ENCODE measurements at regions of chr18 and their contacts with region 1.

Region 1: GRCh38 chr18:63320046-63320689 is 599 bp upstream of the BCL2 start:
- DNase-seq: no peak
- ATAC-seq: peak; percentile 37
- H3K4me3 ChIP-seq: peak overlapping the region; percentile 54; the same call in 1 of the 2 replicates
- H3K27ac ChIP-seq: peak overlapping the region; percentile 90
- H3K4me1 ChIP-seq: peaks cover 20% of the 10 kb centered on the region
- H3K27me3 ChIP-seq: no peaks in the 10 kb centered on the region
- CTCF ChIP-seq: no peak; a peak in 1 of 6 replicates
- EP300 ChIP-seq: no peak
- POLR2A ChIP-seq: no peak; the same call in 1 of the 2 replicates
- RAD21 ChIP-seq: no peak

Region 2: GRCh38 chr18:63016270-63016669 is 303.9 kb before region 1 on chr18:
- CTCF ChIA-PET with region 1: interaction called, 123 read pairs
- POLR2A ChIA-PET with region 1: interaction called, 7 read pairs
- RAD21 ChIA-PET with region 1: interaction called, 58 read pairs
- SMC1A ChIA-PET with region 1: interaction called, 92 read pairs
- in situ Hi-C with region 1: loop called (anchors 5 kb)
- intact Hi-C with region 1: loop called (anchors 1 kb)
- DNase-seq: peak; percentile 21
- ATAC-seq: peak; percentile 92
- H3K4me3 ChIP-seq: no peak overlapping the region
- H3K27ac ChIP-seq: no peak overlapping the region
- H3K4me1 ChIP-seq: no peaks in the 10 kb centered on the region
- H3K27me3 ChIP-seq: no peaks in the 10 kb centered on the region
- CTCF ChIP-seq: peak; percentile 72 to 88 (median 72)
- EP300 ChIP-seq: no peak
- POLR2A ChIP-seq: no peak
- RAD21 ChIP-seq: peak; percentile 99

Region 3: DNA sequence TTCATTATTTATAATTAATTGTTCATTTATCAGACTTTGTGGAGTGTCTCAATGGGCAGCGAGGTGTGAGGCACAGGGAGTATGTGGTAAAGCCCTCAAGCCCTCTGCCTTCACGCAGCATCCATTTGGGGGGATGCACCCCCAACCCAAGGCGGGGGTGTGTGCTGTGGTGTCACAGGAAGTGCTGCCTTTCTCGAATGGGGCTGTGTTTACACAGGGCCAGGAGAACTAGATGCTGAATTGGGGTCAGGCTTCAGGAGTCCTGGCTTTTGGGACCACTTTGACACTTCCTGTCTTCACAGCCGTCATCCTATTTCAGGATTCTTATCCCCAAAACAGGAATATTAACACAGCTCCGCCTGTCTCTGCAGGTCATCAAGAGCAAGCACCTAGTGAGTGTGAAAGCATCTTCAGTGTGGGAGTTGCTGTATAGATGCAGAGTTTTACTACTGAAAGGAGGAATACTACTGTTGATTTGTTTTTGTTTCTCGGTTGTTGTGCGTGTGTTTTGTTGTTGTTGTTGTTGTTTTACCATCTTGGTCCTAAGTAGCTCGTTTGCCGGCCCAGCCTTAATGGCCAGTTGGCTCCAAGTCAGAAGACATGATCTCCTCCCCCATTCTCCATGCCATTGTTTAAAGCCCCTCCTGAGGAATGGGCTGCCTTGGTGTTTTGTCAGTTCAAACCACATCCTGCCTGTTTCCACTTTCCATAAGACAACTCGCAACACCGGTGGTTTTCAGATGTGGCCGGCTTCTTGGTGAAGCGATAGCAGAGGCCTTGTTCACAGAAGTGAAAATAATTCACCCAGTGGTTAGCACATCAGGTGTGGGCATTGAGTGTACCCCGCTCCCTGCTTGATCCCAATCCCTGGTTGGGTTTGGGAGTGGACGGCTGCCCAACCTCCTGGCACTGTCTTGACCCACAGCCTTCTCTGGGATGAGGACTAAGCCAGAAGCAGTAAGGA is 221.9 kb before region 1 on chr18:
- CTCF ChIA-PET with region 1: interaction called, 13 read pairs
- POLR2A ChIA-PET with region 1: no interaction called
- RAD21 ChIA-PET with region 1: interaction called, 9 read pairs
- SMC1A ChIA-PET with region 1: interaction called, 7 read pairs
- in situ Hi-C with region 1: no loop called
- intact Hi-C with region 1: no loop called
- DNase-seq: peak; percentile 77
- ATAC-seq: peak; percentile 79
- H3K4me3 ChIP-seq: peak overlapping the region; percentile 8; the same call in 1 of the 2 replicates
- H3K27ac ChIP-seq: peak overlapping the region; percentile 86
- H3K4me1 ChIP-seq: peaks cover 34% of the 10 kb centered on the region
- H3K27me3 ChIP-seq: no peaks in the 10 kb centered on the region
- CTCF ChIP-seq: no peak
- EP300 ChIP-seq: peak; percentile 65 to 83; a peak in 3 of 4 replicates
- POLR2A ChIP-seq: no peak
- RAD21 ChIP-seq: no peak

Region 4: GRCh38 chr18:63138436-63139340 is 181.5 kb before region 1 on chr18:
- CTCF ChIA-PET with region 1: interaction called, 95 read pairs
- POLR2A ChIA-PET with region 1: interaction called, 20 read pairs
- RAD21 ChIA-PET with region 1: interaction called, 63 read pairs
- SMC1A ChIA-PET with region 1: interaction called, 30 read pairs
- in situ Hi-C with region 1: loop called (anchors 5 kb)
- intact Hi-C with region 1: no loop called
- DNase-seq: peak; percentile 94
- ATAC-seq: peak; percentile 58
- H3K4me3 ChIP-seq: peak overlapping the region; percentile 65
- H3K27ac ChIP-seq: peak overlapping the region; percentile 96
- H3K4me1 ChIP-seq: peaks cover 72% of the 10 kb centered on the region
- H3K27me3 ChIP-seq: no peaks in the 10 kb centered on the region
- CTCF ChIP-seq: no peak
- EP300 ChIP-seq: peak in 1 of 2 experiments; percentile 69; a peak in 1 of 4 replicates
- POLR2A ChIP-seq: peak; percentile 74
- RAD21 ChIP-seq: no peak

Region 5: GRCh38 chr18:63177919-63178821 is 142.0 kb before region 1 on chr18:
- CTCF ChIA-PET with region 1: interaction called, 8 read pairs
- POLR2A ChIA-PET with region 1: interaction called, 5 read pairs
- RAD21 ChIA-PET with region 1: interaction called, 9 read pairs
- SMC1A ChIA-PET with region 1: interaction called, 12 read pairs
- in situ Hi-C with region 1: no loop called
- intact Hi-C with region 1: no loop called
- DNase-seq: no peak
- ATAC-seq: peak; percentile 16; the same call in 2 of the 3 replicates
- H3K4me3 ChIP-seq: no peak overlapping the region
- H3K27ac ChIP-seq: peak overlapping the region; percentile 64
- H3K4me1 ChIP-seq: peaks cover 81% of the 10 kb centered on the region
- H3K27me3 ChIP-seq: no peaks in the 10 kb centered on the region
- CTCF ChIP-seq: no peak
- EP300 ChIP-seq: no peak; a peak in 1 of 4 replicates
- POLR2A ChIP-seq: no peak
- RAD21 ChIP-seq: 0 out of 2 replicates have a peak, but pooled peaks have one; percentile 12

Region 6: DNA sequence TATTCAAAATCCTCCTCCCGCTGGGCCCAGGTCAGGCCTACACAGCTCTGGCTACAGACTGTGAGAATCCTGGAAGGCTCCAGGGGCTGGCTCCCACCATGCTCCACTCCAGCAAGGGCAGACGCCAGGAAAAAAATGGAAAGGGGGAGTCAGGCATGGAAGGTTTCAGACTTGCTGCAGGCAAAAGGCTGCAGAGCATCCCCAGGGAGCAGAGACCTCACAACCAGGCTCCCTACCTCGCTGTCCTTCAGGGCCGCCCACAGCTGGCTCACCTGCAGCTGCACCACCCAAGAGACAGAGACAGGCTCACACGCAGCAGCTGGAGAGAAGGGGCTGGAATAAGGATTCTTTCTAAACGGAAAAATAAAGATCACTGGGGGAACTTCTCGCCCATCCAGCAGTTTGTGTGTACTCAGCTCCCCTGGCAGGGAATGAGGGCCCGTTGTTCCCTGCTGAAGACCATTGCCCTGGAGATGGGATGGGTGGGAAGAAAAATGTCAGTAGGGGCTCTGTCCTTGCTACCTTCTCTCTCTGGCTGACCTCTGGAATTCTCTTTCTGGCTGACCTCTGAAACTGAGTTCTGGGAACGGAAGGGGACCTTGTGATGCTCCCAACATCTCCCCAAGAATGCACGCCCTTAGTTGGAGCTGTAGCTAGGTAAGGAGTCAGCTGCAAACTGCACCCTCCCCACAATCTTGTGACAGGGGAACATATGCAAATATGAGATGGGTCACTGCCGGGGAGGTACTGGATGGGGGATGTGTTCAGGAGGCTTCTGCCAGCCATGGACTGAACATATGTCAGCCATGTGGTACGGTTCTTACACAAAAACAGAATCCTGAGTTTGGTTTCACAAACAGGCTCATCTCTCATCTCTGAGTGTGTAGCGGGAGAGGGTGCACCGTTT is 35.1 kb before region 1 on chr18:
- CTCF ChIA-PET with region 1: interaction called, 9 read pairs
- POLR2A ChIA-PET with region 1: interaction called, 6 read pairs
- RAD21 ChIA-PET with region 1: interaction called, 10 read pairs
- SMC1A ChIA-PET with region 1: interaction called, 11 read pairs
- in situ Hi-C with region 1: no loop called
- intact Hi-C with region 1: no loop called
- DNase-seq: peak; percentile 66
- ATAC-seq: peak; percentile 94
- H3K4me3 ChIP-seq: peak overlapping the region; percentile 25
- H3K27ac ChIP-seq: peak overlapping the region; percentile 73
- H3K4me1 ChIP-seq: peaks cover 57% of the 10 kb centered on the region
- H3K27me3 ChIP-seq: no peaks in the 10 kb centered on the region
- CTCF ChIP-seq: no peak
- EP300 ChIP-seq: no peak
- POLR2A ChIP-seq: peak; percentile 65
- RAD21 ChIP-seq: no peak

Region 7: DNA sequence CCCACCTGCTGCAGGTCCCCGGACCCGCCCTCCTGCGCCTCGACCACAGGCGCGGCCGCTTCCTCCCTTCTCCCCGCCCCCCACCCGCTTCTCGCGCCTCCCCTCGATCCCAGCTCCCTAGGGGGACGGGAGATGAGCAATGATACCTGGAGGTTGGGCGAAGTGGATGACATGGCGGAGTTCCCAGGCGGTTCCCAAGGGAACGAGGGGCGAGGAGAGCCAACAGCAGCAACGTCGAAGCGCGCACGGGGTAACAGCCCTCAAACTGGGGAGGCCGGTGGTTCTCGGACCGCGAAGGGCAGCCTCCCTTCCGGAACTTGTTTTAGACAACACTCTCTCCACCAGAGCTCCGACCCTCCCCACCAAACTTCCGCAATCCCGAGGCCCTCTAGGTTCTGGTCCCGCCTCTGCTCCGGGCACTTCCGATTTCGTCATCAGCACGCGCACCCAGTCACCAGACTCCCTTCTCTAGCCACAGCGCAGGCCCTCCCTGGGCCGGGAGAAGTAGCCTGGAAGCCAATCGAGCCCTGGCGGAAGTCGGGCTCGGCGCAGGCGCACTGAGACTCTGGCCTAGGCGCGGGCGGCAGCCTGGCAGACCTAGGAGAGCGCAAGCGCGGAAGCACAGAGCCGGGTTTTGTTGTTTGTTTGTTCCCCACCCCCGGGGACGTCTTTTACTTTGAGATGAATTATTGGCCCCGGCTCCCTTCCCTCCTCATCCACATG is 102.1 kb after region 1 on chr18 and contains the start of gene VPS4B:
- CTCF ChIA-PET with region 1: no interaction called
- POLR2A ChIA-PET with region 1: no interaction called
- RAD21 ChIA-PET with region 1: interaction called, 3 read pairs
- SMC1A ChIA-PET with region 1: interaction called, 4 read pairs
- in situ Hi-C with region 1: no loop called
- intact Hi-C with region 1: loop called (anchors 5 kb)
- DNase-seq: peak; percentile 98
- ATAC-seq: peak; percentile 97
- H3K4me3 ChIP-seq: peak within 1 kb of the TSS; percentile 90
- H3K27ac ChIP-seq: peak within 1 kb of the TSS; percentile 94
- H3K4me1 ChIP-seq: no peaks in the 10 kb centered on the region
- H3K27me3 ChIP-seq: no peaks in the 10 kb centered on the region
- CTCF ChIP-seq: no peak
- EP300 ChIP-seq: no peak
- POLR2A ChIP-seq: peak; percentile 90
- RAD21 ChIP-seq: no peak
- polyA plus RNA-seq, gene VPS4B: 25.7 to 29.9 TPM

Measured in GM12878 (cell line).